Gastrocnemius medialis (tissue), 4 donors: ENCODE measurements at regions of chr3 and their contacts with region 1.

Region 1: GRCh38 chr3:40445062-40445461 is 12.1 kb upstream of the RPL14 start:
- DNase-seq: no peak
- ATAC-seq: no peak
- H3K4me3 ChIP-seq: no peak overlapping the region
- H3K27ac ChIP-seq: no peak overlapping the region
- H3K4me1 ChIP-seq: no peaks in the 10 kb centered on the region
- H3K27me3 ChIP-seq: no peaks in the 10 kb centered on the region
- CTCF ChIP-seq: no peak
- POLR2A ChIP-seq: no peak

Region 2: GRCh38 chr3:40337136-40338108 is 107.6 kb before region 1 on chr3:
- in situ Hi-C with region 1: loop called in 1 of 4 experiments (anchors 10 kb)
- intact Hi-C with region 1: no loop called
- DNase-seq: no peak
- ATAC-seq: no peak
- H3K4me3 ChIP-seq: no peak overlapping the region
- H3K27ac ChIP-seq: no peak overlapping the region
- H3K4me1 ChIP-seq: peaks cover 5 to 8% of the 10 kb centered on the region in 2 donors
- H3K27me3 ChIP-seq: no peaks in the 10 kb centered on the region
- CTCF ChIP-seq: no peak
- POLR2A ChIP-seq: no peak

Region 3: DNA sequence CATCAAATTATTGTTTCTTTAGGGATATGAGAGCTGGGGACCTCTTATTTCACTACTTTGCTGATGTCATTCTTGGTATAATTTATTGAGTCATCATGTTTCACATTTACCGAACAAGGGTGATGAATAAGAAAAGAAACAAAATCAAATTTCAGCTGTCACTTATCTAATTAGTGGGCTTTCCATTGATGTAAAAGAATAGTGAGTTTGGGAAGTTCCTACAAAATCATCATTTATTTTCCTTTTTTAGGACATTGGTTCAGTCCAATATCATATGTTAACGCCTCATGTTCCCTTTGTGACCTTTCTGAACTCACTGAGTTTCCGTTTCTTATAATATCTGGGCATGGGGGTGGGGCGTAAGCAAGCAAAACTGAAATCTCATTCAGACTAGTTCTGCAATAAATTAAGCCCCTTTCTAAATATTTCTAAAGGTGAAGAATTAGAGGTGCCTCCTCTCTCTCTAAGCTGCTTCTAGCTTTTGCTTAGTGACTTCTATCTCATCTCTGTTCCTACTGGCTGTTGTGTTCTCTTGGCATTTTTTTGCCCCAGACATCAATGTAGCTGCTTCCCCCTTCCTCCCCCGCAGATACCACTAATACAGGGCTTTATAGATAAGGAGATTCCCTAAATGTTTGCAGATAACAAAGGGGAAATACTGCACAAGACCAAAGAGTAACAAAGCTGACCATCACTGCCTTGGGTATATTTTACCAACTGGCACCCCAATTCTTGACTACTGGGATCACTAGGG is 516.2 kb after region 1 on chr3:
- in situ Hi-C with region 1: no loop called
- intact Hi-C with region 1: no loop called
- DNase-seq: no peak
- ATAC-seq: no peak
- H3K4me3 ChIP-seq: no peak overlapping the region
- H3K27ac ChIP-seq: no peak overlapping the region
- H3K4me1 ChIP-seq: no peaks in the 10 kb centered on the region
- H3K27me3 ChIP-seq: no peaks in the 10 kb centered on the region
- CTCF ChIP-seq: no peak
- POLR2A ChIP-seq: no peak